Ascending aorta (tissue), 2 donors: ENCODE measurements at regions of chr3 and their contacts with region 1.

Region 1: GRCh38 chr3:11607816-11608215 is 35.9 kb downstream of the VGLL4 start:
- DNase-seq: no peak
- H3K4me3 ChIP-seq: no peak overlapping the region
- H3K27ac ChIP-seq: peak overlapping the region in 1 of 2 donors; percentile 31
- H3K4me1 ChIP-seq: peaks cover 12 to 35% of the 10 kb centered on the region in 2 donors
- H3K27me3 ChIP-seq: no peaks in the 10 kb centered on the region
- CTCF ChIP-seq: no peak

Region 2: DNA sequence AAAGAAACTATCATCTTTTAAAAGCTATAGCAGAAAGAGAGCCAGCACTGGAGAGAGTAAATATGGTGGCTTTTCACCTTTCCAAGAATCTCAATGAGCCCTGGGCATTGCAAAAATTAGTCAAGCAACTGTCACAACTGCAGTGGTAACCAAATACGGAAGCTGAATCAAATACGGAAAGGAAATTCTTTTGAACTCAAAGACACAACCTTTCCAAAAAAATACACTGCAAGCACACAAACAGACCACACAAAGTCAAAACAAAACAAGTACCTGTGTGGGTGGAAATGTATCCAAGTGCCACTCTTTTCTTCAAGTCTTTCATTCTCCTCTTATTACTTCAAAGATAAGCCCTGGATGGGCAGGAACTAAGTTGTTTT is 18.3 kb after region 1 on chr3:
- intact Hi-C with region 1: loop called (anchors 2 kb)
- DNase-seq: no peak
- H3K4me3 ChIP-seq: no peak overlapping the region
- H3K27ac ChIP-seq: peak overlapping the region in 1 of 2 donors; percentile 45
- H3K4me1 ChIP-seq: peaks cover 7 to 36% of the 10 kb centered on the region in 2 donors
- H3K27me3 ChIP-seq: no peaks in the 10 kb centered on the region
- CTCF ChIP-seq: no peak